ENCODE measurements at regions of chr17 and their contacts with region 1.

Region 1: GRCh38 chr17:7989781-7990655 is 12.4 kb upstream of the GUCY2D start:
- DNase-seq: peak; percentile 97
- ATAC-seq: peak; percentile 91
- H3K4me3 Mint-ChIP-seq: peak overlapping the region; percentile 71
- H3K27ac Mint-ChIP-seq: no peak overlapping the region
- H3K4me1 Mint-ChIP-seq: peaks cover 12% of the 10 kb centered on the region
- H3K27me3 Mint-ChIP-seq: peaks cover 37% of the 10 kb centered on the region
- CTCF ChIP-seq: peak; percentile 90

Region 2: GRCh38 chr17:7856883-7857723 is 132.9 kb before region 1 on chr17 and contains the start of gene NAA38:
- CTCF ChIA-PET with region 1: interaction called, 22 read pairs
- POLR2A ChIA-PET with region 1: no interaction called
- DNase-seq: peak; percentile 96
- ATAC-seq: peak; percentile 84
- H3K4me3 Mint-ChIP-seq: no peak within 1 kb of the TSS
- H3K27ac Mint-ChIP-seq: no peak within 1 kb of the TSS
- H3K4me1 Mint-ChIP-seq: peaks cover 21% of the 10 kb centered on the region
- H3K27me3 Mint-ChIP-seq: peaks cover 19% of the 10 kb centered on the region
- CTCF ChIP-seq: no peak
- total RNA-seq, gene NAA38: 41.8 to 46.3 TPM (median 43.4 TPM) in 3 replicates

Region 3: DNA sequence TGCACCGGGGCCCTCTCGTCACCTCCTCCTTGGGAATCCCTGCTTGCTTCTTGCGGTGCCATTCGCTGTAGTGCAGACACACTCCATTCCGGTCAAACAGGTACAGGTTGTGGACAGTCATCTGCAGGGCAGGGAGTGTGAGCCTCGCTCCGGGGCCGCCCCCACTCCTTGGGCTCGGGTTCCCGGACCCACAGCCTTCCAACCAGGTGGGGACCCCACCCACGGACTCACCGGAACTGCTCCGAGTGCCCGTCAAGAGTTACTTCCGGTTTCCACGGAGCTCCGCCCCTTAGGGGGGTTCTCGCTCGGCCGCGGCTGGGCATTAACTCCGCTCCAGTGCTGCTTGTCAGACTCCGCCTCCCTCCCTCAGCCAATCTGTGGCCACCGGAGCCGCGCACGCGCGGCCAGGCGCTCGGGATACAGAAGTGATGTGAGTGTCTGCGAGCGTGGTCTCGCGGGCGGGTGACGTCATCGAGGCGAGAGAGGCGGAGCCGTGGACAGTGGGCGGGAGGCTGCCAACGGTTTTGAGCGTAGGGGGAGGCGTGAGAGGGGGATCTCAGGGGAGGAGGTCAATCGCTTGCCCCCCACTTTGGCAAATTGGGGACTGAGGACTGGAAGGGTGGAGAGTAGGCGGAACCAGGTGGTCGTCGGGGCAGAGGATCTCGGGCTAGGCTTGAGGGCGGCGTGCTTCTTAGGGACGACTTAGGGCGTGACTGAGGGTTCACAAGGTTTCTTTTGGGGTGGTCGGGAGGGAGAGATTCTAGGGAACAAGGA is 58.1 kb before region 1 on chr17 and contains the starts of genes CNTROB and TRAPPC1:
- CTCF ChIA-PET with region 1: interaction called, 82 read pairs
- POLR2A ChIA-PET with region 1: no interaction called
- DNase-seq: peak; percentile 98
- ATAC-seq: peak; percentile 90
- H3K4me3 Mint-ChIP-seq: peak within 1 kb of the TSS; percentile 100
- H3K27ac Mint-ChIP-seq: peak within 1 kb of the TSS; percentile 97
- H3K4me1 Mint-ChIP-seq: peaks cover 32% of the 10 kb centered on the region
- H3K27me3 Mint-ChIP-seq: peaks cover 37% of the 10 kb centered on the region
- CTCF ChIP-seq: no peak
- total RNA-seq, gene CNTROB: 37.0 to 39.7 TPM (median 38.5 TPM) in 3 replicates
- total RNA-seq, gene TRAPPC1: 99.7 to 135 TPM (median 125 TPM) in 3 replicates

Region 4: GRCh38 chr17:8016632-8017478 is 26.8 kb after region 1 on chr17:
- CTCF ChIA-PET with region 1: interaction called, 49 read pairs
- POLR2A ChIA-PET with region 1: no interaction called
- DNase-seq: peak; percentile 92
- ATAC-seq: peak; percentile 90
- H3K4me3 Mint-ChIP-seq: peak overlapping the region; percentile 84
- H3K27ac Mint-ChIP-seq: no peak overlapping the region
- H3K4me1 Mint-ChIP-seq: 0 out of 2 replicates have a peak, but pooled peaks cover 2% of the 10 kb centered on the region
- H3K27me3 Mint-ChIP-seq: peaks cover 23% of the 10 kb centered on the region
- CTCF ChIP-seq: peak; percentile 85

Region 5: GRCh38 chr17:8057691-8058114 is 67.7 kb after region 1 on chr17:
- CTCF ChIA-PET with region 1: interaction called, 28 read pairs
- POLR2A ChIA-PET with region 1: no interaction called
- DNase-seq: peak; percentile 47
- ATAC-seq: peak; percentile 87
- H3K4me3 Mint-ChIP-seq: peak overlapping the region; percentile 32; the same call in 1 of the 2 replicates
- H3K27ac Mint-ChIP-seq: no peak overlapping the region
- H3K4me1 Mint-ChIP-seq: peaks cover 38% of the 10 kb centered on the region
- H3K27me3 Mint-ChIP-seq: peaks cover 38% of the 10 kb centered on the region
- CTCF ChIP-seq: peak; percentile 62

Region 6: GRCh38 chr17:8220779-8221662 is 231.0 kb after region 1 on chr17:
- CTCF ChIA-PET with region 1: no interaction called
- POLR2A ChIA-PET with region 1: no interaction called
- DNase-seq: peak; percentile 96
- ATAC-seq: peak; percentile 12
- H3K4me3 Mint-ChIP-seq: peak overlapping the region; percentile 99
- H3K27ac Mint-ChIP-seq: peak overlapping the region; percentile 99
- H3K4me1 Mint-ChIP-seq: peaks cover 14% of the 10 kb centered on the region
- H3K27me3 Mint-ChIP-seq: peaks cover 5% of the 10 kb centered on the region
- CTCF ChIP-seq: no peak